G401 (cell line): ENCODE measurements at regions of chr2 and their contacts with region 1.

Region 1: GRCh38 chr2:158024288-158024898 is 77.3 kb upstream of the UPP2 start:
- DNase-seq: peak; percentile 61

Region 2: GRCh38 chr2:157777427-157777826 is 247.0 kb before region 1 on chr2:
- in situ Hi-C with region 1: loop called (anchors 25 kb)
- DNase-seq: peak; percentile 53

Region 3: GRCh38 chr2:157952558-157952957 is 71.8 kb before region 1 on chr2:
- in situ Hi-C with region 1: no loop called
- DNase-seq: no peak

Region 4: GRCh38 chr2:157989227-157989626 is 35.2 kb before region 1 on chr2:
- in situ Hi-C with region 1: no loop called
- DNase-seq: peak; percentile 50

Region 5: DNA sequence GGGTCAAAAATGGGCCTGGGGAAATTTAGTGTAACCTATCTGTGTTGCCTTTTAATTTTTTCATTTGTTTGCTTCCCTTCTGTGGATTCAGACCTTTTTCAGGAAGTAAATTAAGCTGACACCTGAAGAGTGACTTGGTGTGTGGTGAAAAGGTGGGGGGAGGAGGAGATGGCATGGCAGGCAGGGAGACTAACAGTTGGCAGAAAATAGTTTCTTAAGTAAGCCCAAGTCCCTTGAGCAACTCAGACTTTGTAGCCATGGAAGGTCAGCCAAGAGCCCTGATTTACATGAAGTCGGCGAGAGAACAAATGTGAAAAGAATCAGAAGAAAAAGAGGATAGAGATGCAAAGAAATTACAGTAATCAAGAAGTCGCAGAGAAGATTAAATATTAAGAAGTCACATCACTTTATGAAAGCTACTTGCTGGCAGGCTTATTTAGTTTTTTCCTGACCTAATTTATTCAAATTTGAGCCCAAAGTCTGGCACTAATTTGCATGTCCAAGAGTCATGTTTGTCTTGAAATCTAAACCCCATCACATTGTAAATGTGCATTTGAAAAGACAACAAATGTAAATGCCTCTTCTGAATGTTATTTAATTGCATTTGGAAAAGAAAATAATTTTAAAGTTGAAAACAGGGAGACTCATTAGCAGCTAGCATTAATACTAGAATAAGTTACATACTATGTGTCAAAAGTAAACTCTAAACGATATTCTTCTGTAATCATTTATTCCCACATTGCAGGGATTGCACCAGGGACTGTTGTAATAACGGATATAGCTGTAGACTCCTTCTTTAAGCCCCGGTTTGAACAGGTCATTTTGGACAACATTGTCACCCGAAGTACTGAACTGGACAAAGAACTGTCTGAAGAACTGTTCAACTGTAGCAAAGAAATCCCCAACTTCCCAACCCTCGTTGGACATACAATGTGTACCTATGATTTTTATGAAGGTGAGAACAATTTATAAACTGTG is 96.6 kb after region 1 on chr2:
- in situ Hi-C with region 1: no loop called
- DNase-seq: no peak

Region 6: GRCh38 chr2:158189526-158189925 is 165.1 kb after region 1 on chr2:
- in situ Hi-C with region 1: no loop called
- DNase-seq: no peak

Region 7: DNA sequence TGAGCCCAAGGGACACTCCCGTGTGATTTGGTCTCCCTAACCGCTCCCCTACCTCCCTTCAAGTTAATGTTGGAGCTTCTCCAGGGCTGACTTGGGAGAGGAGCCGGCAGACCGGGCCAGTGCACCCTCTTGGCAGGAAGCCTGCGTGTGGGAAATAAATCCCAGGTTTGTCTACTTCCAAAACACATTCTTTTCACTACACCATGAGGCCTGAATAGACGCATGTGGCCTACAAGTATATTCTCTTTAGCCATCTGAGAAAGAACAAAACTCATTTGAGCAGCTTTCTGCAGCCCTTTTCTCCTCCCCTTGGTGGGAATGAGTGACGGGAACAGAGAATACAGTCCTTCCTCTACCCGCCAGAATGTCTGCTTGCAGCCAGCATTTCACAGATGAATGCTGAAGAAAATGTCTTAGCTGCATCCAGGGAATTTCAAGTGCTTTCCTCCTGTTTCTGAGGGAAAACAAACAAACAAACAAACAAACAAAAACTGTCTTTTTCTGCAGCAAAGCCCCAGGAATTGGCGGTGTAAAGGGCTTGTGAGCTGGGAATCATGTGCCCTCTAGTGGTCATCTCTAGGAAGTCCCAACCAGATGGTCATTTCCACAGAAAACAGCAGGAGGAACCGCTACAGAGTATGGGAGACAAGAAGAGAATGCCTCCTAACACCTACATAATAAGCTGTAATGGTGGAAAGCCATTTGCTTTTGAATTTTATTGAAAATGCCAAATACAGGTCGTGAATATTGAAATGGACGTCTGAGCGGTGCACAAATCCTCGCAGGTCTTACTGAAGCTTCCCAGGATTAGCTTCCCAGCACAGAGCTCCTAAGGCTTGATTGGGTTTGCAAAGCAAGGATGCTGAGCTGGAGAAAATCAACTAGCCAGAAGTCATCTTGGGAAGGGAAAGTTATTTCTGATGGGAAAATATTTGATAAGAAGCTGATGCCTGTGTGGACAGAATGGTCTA is 729.5 kb after region 1 on chr2:
- in situ Hi-C with region 1: loop called (anchors 25 kb)
- DNase-seq: peak; percentile 93